Activated B cell treated with CpG ODN at 0.5 μM for 24 hours (primary cell): ENCODE measurements at regions of chr22 and their contacts with region 1.

Region 1: DNA sequence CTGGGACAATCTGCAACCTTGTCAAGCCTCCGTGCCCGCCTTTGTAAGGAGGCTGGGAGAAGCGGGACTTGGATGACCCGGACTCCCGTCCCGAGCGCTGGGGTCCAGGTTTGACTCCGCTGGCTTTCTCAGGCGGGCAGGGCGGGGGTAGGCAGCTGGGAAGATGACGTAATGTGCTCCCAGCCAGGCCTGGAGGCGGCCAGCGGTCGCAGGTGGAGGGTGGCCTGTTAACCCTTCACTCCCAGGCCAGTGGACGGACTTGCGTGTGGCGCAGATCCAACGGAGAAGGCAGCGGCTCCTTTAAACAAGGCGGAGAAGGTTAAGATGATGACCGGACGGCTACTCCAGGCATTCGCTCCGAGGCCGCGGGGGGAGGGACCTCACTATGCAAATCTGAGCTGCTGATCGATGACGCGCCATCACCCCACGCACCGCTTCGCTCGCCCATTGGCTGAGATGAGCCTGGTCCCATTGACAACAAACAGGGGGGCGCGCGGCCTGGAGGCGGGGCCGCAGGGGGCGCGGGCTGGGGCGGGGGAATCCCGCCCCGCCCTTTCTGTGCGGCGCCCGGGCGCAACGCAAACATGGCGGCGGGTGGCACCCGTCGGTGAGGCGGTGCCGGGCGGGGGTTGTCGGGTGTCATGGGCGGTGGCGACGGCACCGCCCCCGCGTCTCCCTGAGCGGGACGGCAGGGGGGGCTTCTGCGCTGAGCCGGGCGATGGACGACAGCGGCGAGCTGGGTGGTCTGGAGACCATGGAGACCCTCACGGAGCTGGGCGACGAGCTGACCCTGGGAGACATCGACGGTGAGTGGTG is at the start of gene SREBF2:
- DNase-seq: peak; percentile 96
- ATAC-seq: peak; percentile 85
- H3K4me3 Mint-ChIP-seq: peak within 1 kb of the TSS; percentile 98
- H3K27ac Mint-ChIP-seq: peak within 1 kb of the TSS; percentile 99
- H3K4me1 Mint-ChIP-seq: peaks cover 62% of the 10 kb centered on the region
- H3K27me3 Mint-ChIP-seq: no peaks in the 10 kb centered on the region
- CTCF ChIP-seq: no peak
- total RNA-seq, gene SREBF2: 253 and 307 TPM in 2 replicates

Region 2: DNA sequence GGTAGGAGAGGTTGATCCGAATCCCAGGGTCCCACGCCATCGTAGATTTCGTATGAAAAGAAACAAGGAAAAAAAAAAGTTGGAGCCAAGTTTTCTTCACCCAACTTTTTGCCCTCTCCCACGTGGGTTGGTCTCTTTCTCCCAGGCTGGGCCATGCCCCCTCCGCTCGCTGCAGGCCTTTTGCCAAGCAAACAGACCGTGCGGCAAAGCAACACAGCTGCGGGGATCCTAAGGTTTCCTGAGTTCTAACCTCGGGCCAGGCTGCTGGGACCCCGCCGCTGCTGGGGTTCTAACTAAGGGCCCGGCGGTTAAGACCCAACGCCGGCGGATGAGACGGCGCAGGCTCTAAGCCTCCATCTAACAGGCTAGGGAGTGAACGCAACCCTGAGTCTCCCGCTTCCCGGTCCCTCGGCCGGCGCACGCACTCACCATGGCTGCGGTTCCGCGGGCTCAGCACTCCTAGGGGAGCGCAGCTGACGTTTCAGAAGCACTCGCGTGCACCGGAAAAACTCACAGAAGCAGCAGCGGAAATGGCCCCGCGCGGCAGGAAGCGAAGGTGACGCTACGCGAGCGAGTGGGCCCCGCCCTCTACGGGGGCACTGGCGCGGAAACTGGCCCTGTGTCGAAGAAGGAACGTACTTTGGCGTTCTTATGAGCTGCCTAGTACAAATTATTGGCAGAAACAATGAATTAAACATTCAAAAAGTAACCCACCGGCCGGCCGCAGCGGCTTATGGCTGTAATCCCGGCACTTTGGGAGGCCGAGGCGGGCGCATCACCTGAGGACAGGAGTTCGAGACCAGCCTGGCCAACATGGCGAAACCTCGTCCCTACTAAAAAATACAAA is 144.2 kb before region 1 on chr22 and contains the start of gene SNU13:
- CTCF ChIA-PET with region 1: no interaction called
- POLR2A ChIA-PET with region 1: interaction called, 16 read pairs
- intact Hi-C with region 1: no loop called
- DNase-seq: peak; percentile 88
- ATAC-seq: peak; percentile 94
- H3K4me3 Mint-ChIP-seq: peak within 1 kb of the TSS; percentile 97
- H3K27ac Mint-ChIP-seq: peak within 1 kb of the TSS; percentile 96
- H3K4me1 Mint-ChIP-seq: peaks cover 28% of the 10 kb centered on the region
- H3K27me3 Mint-ChIP-seq: no peaks in the 10 kb centered on the region
- CTCF ChIP-seq: no peak
- total RNA-seq, gene SNU13: 157 and 165 TPM in 2 replicates

Region 3: DNA sequence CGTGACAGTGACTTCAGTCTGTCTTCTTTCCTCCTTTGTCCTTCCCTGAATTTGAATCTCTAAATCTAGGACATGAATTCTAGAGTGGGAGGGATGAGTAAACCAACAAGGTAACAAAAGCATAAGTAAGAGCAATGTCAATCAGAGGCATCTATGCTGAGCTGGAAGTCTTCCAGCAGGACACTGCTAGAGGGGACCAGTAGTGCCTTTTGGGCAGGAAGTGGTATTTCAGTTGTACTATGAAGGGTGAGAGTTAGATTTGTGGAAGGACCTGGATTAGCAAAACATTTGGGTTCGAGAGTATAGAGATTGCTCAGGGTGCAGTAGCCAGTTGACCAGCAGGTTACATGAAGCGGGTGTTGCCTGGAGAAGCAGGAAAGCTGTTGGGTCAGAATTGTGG is 93.2 kb before region 1 on chr22:
- CTCF ChIA-PET with region 1: no interaction called
- POLR2A ChIA-PET with region 1: no interaction called
- intact Hi-C with region 1: no loop called
- DNase-seq: no peak
- ATAC-seq: no peak
- H3K4me3 Mint-ChIP-seq: no peak overlapping the region
- H3K27ac Mint-ChIP-seq: no peak overlapping the region
- H3K4me1 Mint-ChIP-seq: no peaks in the 10 kb centered on the region
- H3K27me3 Mint-ChIP-seq: no peaks in the 10 kb centered on the region
- CTCF ChIP-seq: no peak

Region 4: GRCh38 chr22:41780746-41781505 is 51.8 kb before region 1 on chr22:
- CTCF ChIA-PET with region 1: no interaction called
- POLR2A ChIA-PET with region 1: interaction called, 19 read pairs
- intact Hi-C with region 1: no loop called
- DNase-seq: peak; percentile 60
- ATAC-seq: peak; percentile 96
- H3K4me3 Mint-ChIP-seq: peak overlapping the region; percentile 86
- H3K27ac Mint-ChIP-seq: peak overlapping the region; percentile 93
- H3K4me1 Mint-ChIP-seq: peaks cover 40% of the 10 kb centered on the region
- H3K27me3 Mint-ChIP-seq: no peaks in the 10 kb centered on the region
- CTCF ChIP-seq: no peak

Region 5: DNA sequence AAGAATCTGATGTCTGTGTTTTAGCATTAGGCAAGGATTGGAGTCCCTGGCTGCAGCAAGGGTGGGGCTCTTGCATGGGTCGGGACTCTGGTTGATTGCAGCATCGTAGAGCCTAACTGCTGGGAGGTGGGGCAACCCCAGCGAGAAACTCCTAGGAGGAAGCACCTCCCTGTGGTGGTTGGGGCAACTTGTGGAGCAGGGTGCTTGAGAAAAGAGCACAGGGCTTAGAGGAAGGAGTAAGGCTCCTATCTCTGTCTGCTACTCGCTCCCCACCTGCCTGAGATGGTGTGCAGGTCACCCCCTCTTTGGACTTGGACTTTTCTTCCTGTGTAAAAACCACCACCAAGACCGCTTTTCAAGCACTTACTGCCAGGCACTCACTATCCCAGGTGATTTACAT is 15.7 kb after region 1 on chr22:
- CTCF ChIA-PET with region 1: no interaction called
- POLR2A ChIA-PET with region 1: interaction called, 40 read pairs
- intact Hi-C with region 1: no loop called
- DNase-seq: no peak
- ATAC-seq: peak; percentile 58
- H3K4me3 Mint-ChIP-seq: no peak overlapping the region
- H3K27ac Mint-ChIP-seq: peak overlapping the region; percentile 46
- H3K4me1 Mint-ChIP-seq: peaks cover 69% of the 10 kb centered on the region
- H3K27me3 Mint-ChIP-seq: no peaks in the 10 kb centered on the region
- CTCF ChIP-seq: no peak

Region 6: GRCh38 chr22:41910050-41911000 is 77.6 kb after region 1 on chr22:
- CTCF ChIA-PET with region 1: no interaction called
- POLR2A ChIA-PET with region 1: interaction called, 27 read pairs
- intact Hi-C with region 1: no loop called
- DNase-seq: peak; percentile 57
- ATAC-seq: peak; percentile 15
- H3K4me3 Mint-ChIP-seq: peak overlapping the region; percentile 68
- H3K27ac Mint-ChIP-seq: no peak overlapping the region
- H3K4me1 Mint-ChIP-seq: peaks cover 48% of the 10 kb centered on the region
- H3K27me3 Mint-ChIP-seq: peaks cover 10% of the 10 kb centered on the region
- CTCF ChIP-seq: no peak

Region 7: GRCh38 chr22:41931701-41932269 is 99.0 kb after region 1 on chr22:
- CTCF ChIA-PET with region 1: interaction called, 4 read pairs
- POLR2A ChIA-PET with region 1: interaction called, 221 read pairs
- intact Hi-C with region 1: loop called (anchors 1 kb)
- DNase-seq: peak; percentile 72
- ATAC-seq: peak; percentile 35
- H3K4me3 Mint-ChIP-seq: peak overlapping the region; percentile 52
- H3K27ac Mint-ChIP-seq: peak overlapping the region; percentile 100
- H3K4me1 Mint-ChIP-seq: peaks cover 97% of the 10 kb centered on the region
- H3K27me3 Mint-ChIP-seq: no peaks in the 10 kb centered on the region
- CTCF ChIP-seq: no peak